ENCODE measurements at regions of chr9 and their contacts with region 1.

Region 1: GRCh38 chr9:104747558-104748358 is at the start of gene NIPSNAP3A:
- DNase-seq: peak; percentile 83
- H3K4me3 Mint-ChIP-seq: peak within 1 kb of the TSS; percentile 85
- H3K27ac Mint-ChIP-seq: peak within 1 kb of the TSS; percentile 87
- H3K4me1 Mint-ChIP-seq: peaks cover 17% of the 10 kb centered on the region
- H3K27me3 Mint-ChIP-seq: no peaks in the 10 kb centered on the region
- CTCF ChIP-seq: no peak
- total RNA-seq, gene NIPSNAP3A: 15.4 and 15.5 TPM in 2 replicates

Region 2: GRCh38 chr9:103397868-103398600 is 1349.7 kb before region 1 on chr9:
- CTCF ChIA-PET with region 1: no interaction called
- POLR2A ChIA-PET with region 1: no interaction called
- intact Hi-C with region 1: loop called (anchors 10 kb)
- DNase-seq: peak; percentile 65
- H3K4me3 Mint-ChIP-seq: no peak overlapping the region
- H3K27ac Mint-ChIP-seq: no peak overlapping the region
- H3K4me1 Mint-ChIP-seq: peaks cover 6% of the 10 kb centered on the region
- H3K27me3 Mint-ChIP-seq: no peaks in the 10 kb centered on the region
- CTCF ChIP-seq: peak; percentile 76

Region 3: GRCh38 chr9:104448036-104448435 is 299.7 kb before region 1 on chr9:
- CTCF ChIA-PET with region 1: no interaction called
- POLR2A ChIA-PET with region 1: no interaction called
- intact Hi-C with region 1: no loop called
- DNase-seq: no peak
- H3K4me3 Mint-ChIP-seq: no peak overlapping the region
- H3K27ac Mint-ChIP-seq: no peak overlapping the region
- H3K4me1 Mint-ChIP-seq: no peaks in the 10 kb centered on the region
- H3K27me3 Mint-ChIP-seq: no peaks in the 10 kb centered on the region
- CTCF ChIP-seq: no peak

Region 4: DNA sequence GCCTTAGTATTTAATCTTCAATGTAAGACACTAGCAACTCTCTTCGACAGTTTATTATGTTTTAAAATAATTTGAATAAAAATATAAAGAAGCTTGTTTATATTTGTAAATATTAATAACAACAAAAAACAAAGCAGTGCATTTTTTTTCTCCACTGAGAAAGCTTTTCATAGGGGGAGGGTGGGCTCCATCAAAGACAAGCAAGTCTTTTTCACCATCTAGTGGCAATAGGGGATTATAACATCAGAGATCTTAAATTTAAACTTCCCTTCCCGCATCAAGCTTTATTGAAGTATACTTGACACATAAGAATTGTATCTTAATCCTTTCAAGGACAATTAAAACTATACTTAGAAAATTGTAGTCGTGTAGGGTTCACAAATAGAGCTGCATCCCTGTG is 252.9 kb before region 1 on chr9:
- CTCF ChIA-PET with region 1: interaction called, 13 read pairs
- POLR2A ChIA-PET with region 1: no interaction called
- intact Hi-C with region 1: loop called (anchors 1 kb)
- DNase-seq: peak; percentile 6
- H3K4me3 Mint-ChIP-seq: no peak overlapping the region
- H3K27ac Mint-ChIP-seq: no peak overlapping the region
- H3K4me1 Mint-ChIP-seq: no peaks in the 10 kb centered on the region
- H3K27me3 Mint-ChIP-seq: no peaks in the 10 kb centered on the region
- CTCF ChIP-seq: peak; percentile 42

Region 5: DNA sequence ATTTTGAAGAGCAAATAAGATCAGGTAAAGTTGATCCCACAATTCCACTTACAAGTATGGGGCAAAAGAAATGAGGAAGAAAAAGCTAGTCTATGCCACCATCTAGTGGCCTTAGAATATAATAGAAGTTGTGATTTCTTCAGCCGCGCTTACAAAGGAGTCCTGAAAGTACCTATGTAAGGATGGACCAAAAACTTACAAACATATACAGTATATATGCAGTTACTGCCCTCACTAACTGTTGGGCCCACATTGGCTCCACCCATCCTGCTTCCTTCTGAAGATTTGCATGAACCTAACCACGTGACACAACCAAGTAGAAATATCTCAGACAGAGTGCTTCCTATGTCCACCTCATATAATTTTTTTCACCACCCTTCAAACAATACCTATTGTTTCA is 65.1 kb before region 1 on chr9:
- CTCF ChIA-PET with region 1: interaction called, 8 read pairs
- POLR2A ChIA-PET with region 1: no interaction called
- intact Hi-C with region 1: loop called (anchors 1 kb)
- DNase-seq: peak; percentile 78
- H3K4me3 Mint-ChIP-seq: no peak overlapping the region
- H3K27ac Mint-ChIP-seq: no peak overlapping the region
- H3K4me1 Mint-ChIP-seq: no peaks in the 10 kb centered on the region
- H3K27me3 Mint-ChIP-seq: no peaks in the 10 kb centered on the region
- CTCF ChIP-seq: peak; percentile 53

Region 6: DNA sequence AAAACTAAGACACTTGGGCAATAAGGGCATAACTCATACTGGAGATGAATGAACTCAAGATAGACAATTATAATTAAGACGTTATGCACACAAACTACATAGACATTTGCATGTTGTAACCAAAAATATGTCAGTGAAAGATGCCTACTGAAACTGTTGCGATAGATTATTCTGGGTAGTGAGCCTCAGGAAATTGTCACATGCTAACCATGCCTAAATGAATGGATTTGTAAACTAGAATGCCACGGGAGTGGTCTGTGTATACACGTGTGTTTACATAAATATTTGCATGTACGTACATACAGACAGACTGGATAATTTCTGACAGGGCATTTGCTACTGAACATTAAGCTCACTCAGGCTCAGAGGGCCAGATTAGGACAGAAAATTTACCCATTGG is 17.4 kb after region 1 on chr9:
- CTCF ChIA-PET with region 1: no interaction called
- POLR2A ChIA-PET with region 1: interaction called, 23 read pairs
- intact Hi-C with region 1: no loop called
- DNase-seq: no peak
- H3K4me3 Mint-ChIP-seq: peak overlapping the region; percentile 73
- H3K27ac Mint-ChIP-seq: no peak overlapping the region
- H3K4me1 Mint-ChIP-seq: no peaks in the 10 kb centered on the region
- H3K27me3 Mint-ChIP-seq: no peaks in the 10 kb centered on the region
- CTCF ChIP-seq: no peak

Region 7: GRCh38 chr9:104820336-104820735 is 72.6 kb after region 1 on chr9:
- CTCF ChIA-PET with region 1: no interaction called
- POLR2A ChIA-PET with region 1: no interaction called
- intact Hi-C with region 1: no loop called
- DNase-seq: no peak
- H3K4me3 Mint-ChIP-seq: no peak overlapping the region
- H3K27ac Mint-ChIP-seq: no peak overlapping the region
- H3K4me1 Mint-ChIP-seq: no peaks in the 10 kb centered on the region
- H3K27me3 Mint-ChIP-seq: no peaks in the 10 kb centered on the region
- CTCF ChIP-seq: no peak

Region 8: GRCh38 chr9:105401651-105402050 is 653.9 kb after region 1 on chr9:
- CTCF ChIA-PET with region 1: no interaction called
- POLR2A ChIA-PET with region 1: no interaction called
- intact Hi-C with region 1: no loop called
- DNase-seq: no peak
- H3K4me3 Mint-ChIP-seq: no peak overlapping the region
- H3K27ac Mint-ChIP-seq: no peak overlapping the region
- H3K4me1 Mint-ChIP-seq: no peaks in the 10 kb centered on the region
- H3K27me3 Mint-ChIP-seq: no peaks in the 10 kb centered on the region
- CTCF ChIP-seq: no peak

Measured in MCF 10A (cell line).